ENCODE measurements at regions of chr17 and their contacts with region 1.

Region 1: DNA sequence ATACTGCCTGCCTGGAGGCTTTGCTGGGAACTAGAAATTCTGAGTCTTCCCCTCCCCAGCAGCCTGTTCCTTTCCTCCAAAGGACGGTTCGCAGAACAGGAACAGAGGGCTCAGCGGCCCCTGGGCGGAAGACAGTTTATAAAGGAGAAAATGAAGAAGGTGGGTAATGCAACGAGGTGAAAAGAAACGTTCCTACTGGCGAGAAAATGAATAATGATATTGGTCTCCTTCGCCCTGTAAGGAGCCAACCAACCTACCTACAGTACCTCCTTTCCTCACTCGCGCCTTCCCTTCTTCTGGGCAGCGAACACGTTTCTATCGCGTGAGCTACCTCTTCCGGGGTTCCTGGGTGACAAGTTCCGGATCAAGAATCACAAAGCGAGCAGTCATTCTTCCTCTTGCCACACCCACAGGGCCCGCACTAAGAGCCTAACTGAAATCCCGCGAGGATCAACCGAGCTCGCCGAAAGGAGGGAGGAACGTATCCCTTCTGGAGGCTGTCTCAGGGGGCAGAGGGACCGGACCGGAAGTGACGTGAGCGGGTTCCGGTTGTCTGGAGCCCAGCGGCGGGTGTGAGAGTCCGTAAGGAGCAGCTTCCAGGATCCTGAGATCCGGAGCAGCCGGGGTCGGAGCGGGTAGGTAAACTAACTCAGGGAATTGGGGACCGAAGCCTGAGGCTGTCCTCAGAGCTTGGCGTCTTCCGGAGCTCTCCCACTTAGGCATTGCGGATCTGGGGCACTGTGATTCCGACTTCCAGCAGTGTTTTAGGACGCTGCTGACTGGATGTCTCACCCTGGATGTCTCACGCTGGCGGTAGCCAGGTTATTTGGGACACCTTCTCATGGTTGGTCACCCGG is at the starts of genes PTRH2 and VMP1:
- DNase-seq: peak; percentile 72 to 97 (median 87)
- ATAC-seq: peak; percentile 93
- H3K4me3 ChIP-seq: peak within 1 kb of the TSS; percentile 72 to 80
- H3K4me3 Mint-ChIP-seq: peak within 1 kb of the TSS; percentile 95
- H3K27ac ChIP-seq: peak within 1 kb of the TSS; percentile 80 to 94
- H3K27ac Mint-ChIP-seq: peak within 1 kb of the TSS; percentile 97
- H3K4me1 ChIP-seq: peaks cover 36% of the 10 kb centered on the region
- H3K4me1 Mint-ChIP-seq: peaks cover 63% of the 10 kb centered on the region
- H3K27me3 ChIP-seq: no peaks in the 10 kb centered on the region
- H3K27me3 Mint-ChIP-seq: no peaks in the 10 kb centered on the region
- CTCF ChIP-seq: no peak
- total RNA-seq, gene PTRH2: 6.1 to 7.6 TPM
- total RNA-seq, gene VMP1: 56.8 to 66.2 TPM

Region 2: DNA sequence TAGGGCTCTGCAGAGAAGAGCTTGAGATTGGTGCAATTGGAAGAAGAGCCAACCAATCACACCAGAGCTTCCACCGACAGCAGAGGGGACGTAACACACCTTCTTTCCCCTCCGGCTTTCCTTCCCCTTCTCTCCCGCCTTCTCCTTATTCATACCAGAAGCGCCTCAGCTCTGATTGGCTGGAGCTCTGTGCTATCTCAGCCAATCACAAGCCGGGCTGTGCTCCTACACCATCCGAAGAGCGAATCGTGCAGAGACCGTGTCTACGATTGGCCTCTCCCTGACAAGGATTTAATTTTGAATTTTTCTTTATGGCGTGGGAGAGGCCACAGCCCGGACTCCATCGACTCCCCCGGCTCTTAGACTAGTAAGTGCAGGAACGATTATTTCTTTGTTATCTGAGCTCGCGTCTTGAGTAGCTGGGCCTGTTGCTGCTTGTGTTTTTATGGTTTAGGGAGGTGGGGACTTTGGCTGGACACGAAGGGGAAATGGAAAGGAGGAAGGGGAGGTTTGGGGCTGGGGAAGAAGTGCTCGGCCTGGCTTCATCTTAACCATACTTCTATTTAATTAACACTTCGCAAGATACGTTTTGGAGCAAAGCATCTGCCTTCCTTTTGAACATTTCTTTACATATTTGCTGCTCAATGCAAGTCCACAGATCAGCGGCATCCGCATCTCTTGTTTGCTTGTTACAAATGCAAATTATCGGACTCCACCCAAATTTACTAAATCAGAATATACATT is 551.7 kb before region 1 on chr17 and contains the start of gene PRR11:
- CTCF ChIA-PET with region 1: no interaction called
- POLR2A ChIA-PET with region 1: no interaction called
- intact Hi-C with region 1: loop called in 1 of 2 experiments (anchors 2 kb)
- DNase-seq: peak; percentile 82 to 99 (median 90)
- ATAC-seq: peak; percentile 85
- H3K4me3 ChIP-seq: peak within 1 kb of the TSS; percentile 95 to 97
- H3K4me3 Mint-ChIP-seq: no peak within 1 kb of the TSS
- H3K27ac ChIP-seq: peak within 1 kb of the TSS; percentile 62 to 74
- H3K27ac Mint-ChIP-seq: no peak within 1 kb of the TSS
- H3K4me1 ChIP-seq: peaks cover 15% of the 10 kb centered on the region
- H3K4me1 Mint-ChIP-seq: peaks cover 28% of the 10 kb centered on the region
- H3K27me3 ChIP-seq: no peaks in the 10 kb centered on the region
- H3K27me3 Mint-ChIP-seq: no peaks in the 10 kb centered on the region
- CTCF ChIP-seq: no peak
- total RNA-seq, gene PRR11: 0.30 to 0.69 TPM

Region 3: GRCh38 chr17:59315866-59316265 is 391.5 kb before region 1 on chr17:
- CTCF ChIA-PET with region 1: no interaction called
- POLR2A ChIA-PET with region 1: no interaction called
- intact Hi-C with region 1: no loop called
- DNase-seq: no peak
- ATAC-seq: no peak
- H3K4me3 ChIP-seq: no peak overlapping the region
- H3K4me3 Mint-ChIP-seq: no peak overlapping the region
- H3K27ac ChIP-seq: no peak overlapping the region
- H3K27ac Mint-ChIP-seq: no peak overlapping the region
- H3K4me1 ChIP-seq: no peaks in the 10 kb centered on the region
- H3K4me1 Mint-ChIP-seq: no peaks in the 10 kb centered on the region
- H3K27me3 ChIP-seq: no peaks in the 10 kb centered on the region
- H3K27me3 Mint-ChIP-seq: no peaks in the 10 kb centered on the region
- CTCF ChIP-seq: no peak

Region 4: GRCh38 chr17:59565171-59565969 is 142.0 kb before region 1 on chr17 and contains the start of gene DHX40:
- CTCF ChIA-PET with region 1: no interaction called
- POLR2A ChIA-PET with region 1: interaction called, 5 read pairs
- intact Hi-C with region 1: loop called in 1 of 2 experiments (anchors 1 kb)
- DNase-seq: peak; percentile 86 to 99 (median 95)
- ATAC-seq: peak; percentile 89
- H3K4me3 ChIP-seq: peak within 1 kb of the TSS; percentile 94 to 100
- H3K4me3 Mint-ChIP-seq: peak within 1 kb of the TSS; percentile 100
- H3K27ac ChIP-seq: peak within 1 kb of the TSS; percentile 89 to 97
- H3K27ac Mint-ChIP-seq: peak within 1 kb of the TSS; percentile 100
- H3K4me1 ChIP-seq: peaks cover 17% of the 10 kb centered on the region
- H3K4me1 Mint-ChIP-seq: peaks cover 23% of the 10 kb centered on the region
- H3K27me3 ChIP-seq: no peaks in the 10 kb centered on the region
- H3K27me3 Mint-ChIP-seq: no peaks in the 10 kb centered on the region
- CTCF ChIP-seq: no peak
- total RNA-seq, gene DHX40: 72.7 to 72.8 TPM

Region 5: GRCh38 chr17:59837308-59838051 is 130.1 kb after region 1 on chr17:
- CTCF ChIA-PET with region 1: no interaction called
- POLR2A ChIA-PET with region 1: interaction called, 3 read pairs
- intact Hi-C with region 1: loop called in 1 of 2 experiments (anchors 2 kb)
- DNase-seq: peak in 7 of 9 experiments; percentile 28 to 94 (median 57)
- ATAC-seq: peak; percentile 93
- H3K4me3 ChIP-seq: peak overlapping the region; percentile 14 to 64
- H3K4me3 Mint-ChIP-seq: peak overlapping the region; percentile 92
- H3K27ac ChIP-seq: peak overlapping the region; percentile 69 to 94
- H3K27ac Mint-ChIP-seq: peak overlapping the region; percentile 93
- H3K4me1 ChIP-seq: peaks cover 24% of the 10 kb centered on the region
- H3K4me1 Mint-ChIP-seq: peaks cover 48% of the 10 kb centered on the region
- H3K27me3 ChIP-seq: no peaks in the 10 kb centered on the region
- H3K27me3 Mint-ChIP-seq: no peaks in the 10 kb centered on the region
- CTCF ChIP-seq: no peak

Region 6: GRCh38 chr17:59901604-59902003 is 194.3 kb after region 1 on chr17:
- CTCF ChIA-PET with region 1: no interaction called
- POLR2A ChIA-PET with region 1: no interaction called
- intact Hi-C with region 1: no loop called
- DNase-seq: no peak
- ATAC-seq: no peak
- H3K4me3 ChIP-seq: no peak overlapping the region
- H3K4me3 Mint-ChIP-seq: no peak overlapping the region
- H3K27ac ChIP-seq: no peak overlapping the region
- H3K27ac Mint-ChIP-seq: no peak overlapping the region
- H3K4me1 ChIP-seq: peaks cover 7% of the 10 kb centered on the region
- H3K4me1 Mint-ChIP-seq: peaks cover 43% of the 10 kb centered on the region
- H3K27me3 ChIP-seq: no peaks in the 10 kb centered on the region
- H3K27me3 Mint-ChIP-seq: no peaks in the 10 kb centered on the region
- CTCF ChIP-seq: no peak

Region 7: GRCh38 chr17:59964482-59965328 is 257.4 kb after region 1 on chr17 and contains the start of gene RNFT1:
- CTCF ChIA-PET with region 1: no interaction called
- POLR2A ChIA-PET with region 1: no interaction called
- intact Hi-C with region 1: loop called in 1 of 2 experiments (anchors 1 kb)
- DNase-seq: peak; percentile 82 to 95 (median 91)
- ATAC-seq: peak; percentile 86
- H3K4me3 ChIP-seq: peak within 1 kb of the TSS; percentile 89 to 100
- H3K4me3 Mint-ChIP-seq: peak within 1 kb of the TSS; percentile 95
- H3K27ac ChIP-seq: peak within 1 kb of the TSS; percentile 84 to 93
- H3K27ac Mint-ChIP-seq: peak within 1 kb of the TSS; percentile 97
- H3K4me1 ChIP-seq: peaks cover 22% of the 10 kb centered on the region
- H3K4me1 Mint-ChIP-seq: peaks cover 24% of the 10 kb centered on the region
- H3K27me3 ChIP-seq: no peaks in the 10 kb centered on the region
- H3K27me3 Mint-ChIP-seq: no peaks in the 10 kb centered on the region
- CTCF ChIP-seq: no peak
- total RNA-seq, gene RNFT1: 21.2 to 26.6 TPM